ENCODE measurements at regions of chr11 and their contacts with region 1.

Region 1: GRCh38 chr11:104361975-104362374 is 198.0 kb upstream of the PDGFD start:
- DNase-seq: no peak
- H3K4me3 ChIP-seq: no peak overlapping the region
- H3K27ac ChIP-seq: no peak overlapping the region
- H3K4me1 ChIP-seq: no peaks in the 10 kb centered on the region
- H3K27me3 ChIP-seq: no peaks in the 10 kb centered on the region
- CTCF ChIP-seq: no peak
- POLR2A ChIP-seq: no peak

Region 2: GRCh38 chr11:103358251-103358650 is 1003.7 kb before region 1 on chr11:
- intact Hi-C with region 1: no loop called
- DNase-seq: no peak
- H3K4me3 ChIP-seq: no peak overlapping the region
- H3K27ac ChIP-seq: no peak overlapping the region
- H3K4me1 ChIP-seq: no peaks in the 10 kb centered on the region
- H3K27me3 ChIP-seq: no peaks in the 10 kb centered on the region
- CTCF ChIP-seq: no peak
- POLR2A ChIP-seq: no peak

Region 3: DNA sequence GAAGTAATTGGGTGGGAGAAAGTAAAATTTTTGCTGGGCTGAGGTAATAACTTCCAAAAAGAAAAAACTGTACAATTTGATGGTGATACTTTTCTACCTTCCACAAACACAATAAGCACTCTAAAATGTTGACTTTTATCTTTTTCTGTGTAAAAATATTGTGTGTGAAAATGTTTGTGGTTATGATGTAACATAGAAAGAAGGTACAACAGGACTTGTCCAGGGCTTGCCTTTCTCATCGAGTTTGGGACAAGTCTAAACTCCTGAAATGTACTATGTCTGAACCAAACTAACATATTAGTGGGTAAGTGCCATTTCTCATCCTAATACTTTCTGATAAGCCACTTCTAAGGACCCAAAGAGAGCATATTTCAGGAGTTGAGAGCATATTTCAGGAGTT is 23.8 kb before region 1 on chr11:
- intact Hi-C with region 1: loop called (anchors 2 kb)
- DNase-seq: no peak
- H3K4me3 ChIP-seq: no peak overlapping the region
- H3K27ac ChIP-seq: peak overlapping the region in 1 of 2 donors; percentile 5
- H3K4me1 ChIP-seq: no peaks in the 10 kb centered on the region
- H3K27me3 ChIP-seq: no peaks in the 10 kb centered on the region
- CTCF ChIP-seq: no peak
- POLR2A ChIP-seq: no peak

Region 4: GRCh38 chr11:104402812-104403521 is 41.0 kb after region 1 on chr11:
- intact Hi-C with region 1: no loop called
- DNase-seq: no peak
- H3K4me3 ChIP-seq: no peak overlapping the region
- H3K27ac ChIP-seq: no peak overlapping the region
- H3K4me1 ChIP-seq: no peaks in the 10 kb centered on the region
- H3K27me3 ChIP-seq: no peaks in the 10 kb centered on the region
- CTCF ChIP-seq: no peak
- POLR2A ChIP-seq: no peak

Region 5: DNA sequence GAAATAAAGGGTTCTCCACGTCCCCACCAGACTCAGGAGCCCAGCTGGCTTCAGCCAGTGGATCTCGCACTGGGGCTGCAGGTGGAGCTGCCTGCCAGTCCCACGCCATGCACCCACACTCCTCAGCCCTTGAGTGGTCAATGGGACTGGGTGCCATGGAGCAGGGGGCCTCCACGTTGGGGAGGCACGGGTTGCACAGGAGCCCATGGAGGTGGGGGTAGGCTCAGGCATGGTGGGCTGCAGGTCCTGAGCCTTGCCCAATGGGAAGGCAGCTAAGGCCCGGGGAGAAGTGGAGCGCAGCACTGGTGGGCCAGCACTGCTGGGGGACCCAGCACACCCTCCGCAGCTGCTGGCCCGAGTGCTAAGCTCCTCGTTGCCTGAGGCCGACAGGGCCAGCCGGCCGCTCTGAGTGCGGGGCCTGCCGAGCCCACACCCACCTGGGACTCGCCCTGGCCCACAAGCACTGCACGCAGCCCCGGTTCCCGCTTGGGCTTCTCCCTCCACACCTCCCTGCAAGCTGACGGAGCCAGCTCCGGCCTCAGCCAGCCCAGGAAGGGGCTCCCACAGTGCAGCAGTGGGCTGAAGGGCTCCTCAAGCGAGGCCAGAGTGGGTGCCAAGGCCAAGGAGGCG is 60.5 kb after region 1 on chr11:
- intact Hi-C with region 1: no loop called
- DNase-seq: no peak
- H3K4me3 ChIP-seq: no peak overlapping the region
- H3K27ac ChIP-seq: no peak overlapping the region
- H3K4me1 ChIP-seq: no peaks in the 10 kb centered on the region
- H3K27me3 ChIP-seq: no peaks in the 10 kb centered on the region
- CTCF ChIP-seq: no peak
- POLR2A ChIP-seq: no peak

Region 6: GRCh38 chr11:104462341-104462740 is 100.4 kb after region 1 on chr11:
- intact Hi-C with region 1: no loop called
- DNase-seq: no peak
- H3K4me3 ChIP-seq: no peak overlapping the region
- H3K27ac ChIP-seq: no peak overlapping the region
- H3K4me1 ChIP-seq: no peaks in the 10 kb centered on the region
- H3K27me3 ChIP-seq: no peaks in the 10 kb centered on the region
- CTCF ChIP-seq: no peak
- POLR2A ChIP-seq: no peak

Measured in breast epithelium (tissue), 4 donors.